AG04450 (cell line): ENCODE measurements at regions of chr16 and their contacts with region 1.

Region 1: DNA sequence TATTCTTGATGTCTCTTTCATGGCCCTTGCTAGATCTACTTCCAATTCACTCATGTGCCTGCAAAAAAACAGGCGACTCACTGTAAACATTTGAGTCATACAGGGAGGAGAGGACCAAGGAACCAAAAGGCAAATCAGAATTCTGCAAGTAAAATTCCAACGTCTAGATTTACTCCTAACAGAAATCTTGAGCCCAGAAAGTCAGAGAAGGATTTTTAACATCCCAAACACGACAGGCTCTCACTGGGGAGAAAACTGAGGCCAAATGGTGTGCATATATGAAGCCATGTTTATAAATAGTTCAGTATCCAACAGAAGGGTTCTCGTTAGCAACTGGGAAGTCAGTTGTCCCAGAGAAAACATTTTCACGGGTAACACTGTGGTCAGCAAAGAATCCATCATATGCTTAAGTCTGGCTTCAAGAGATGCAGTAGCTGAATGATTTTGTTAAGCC is 40.1 kb downstream of the LITAF start:
- DNase-seq: peak; percentile 59
- H3K4me3 ChIP-seq: no peak overlapping the region
- H3K27ac ChIP-seq: peak overlapping the region; percentile 13
- H3K27me3 ChIP-seq: no peaks in the 10 kb centered on the region
- CTCF ChIP-seq: no peak

Region 2: DNA sequence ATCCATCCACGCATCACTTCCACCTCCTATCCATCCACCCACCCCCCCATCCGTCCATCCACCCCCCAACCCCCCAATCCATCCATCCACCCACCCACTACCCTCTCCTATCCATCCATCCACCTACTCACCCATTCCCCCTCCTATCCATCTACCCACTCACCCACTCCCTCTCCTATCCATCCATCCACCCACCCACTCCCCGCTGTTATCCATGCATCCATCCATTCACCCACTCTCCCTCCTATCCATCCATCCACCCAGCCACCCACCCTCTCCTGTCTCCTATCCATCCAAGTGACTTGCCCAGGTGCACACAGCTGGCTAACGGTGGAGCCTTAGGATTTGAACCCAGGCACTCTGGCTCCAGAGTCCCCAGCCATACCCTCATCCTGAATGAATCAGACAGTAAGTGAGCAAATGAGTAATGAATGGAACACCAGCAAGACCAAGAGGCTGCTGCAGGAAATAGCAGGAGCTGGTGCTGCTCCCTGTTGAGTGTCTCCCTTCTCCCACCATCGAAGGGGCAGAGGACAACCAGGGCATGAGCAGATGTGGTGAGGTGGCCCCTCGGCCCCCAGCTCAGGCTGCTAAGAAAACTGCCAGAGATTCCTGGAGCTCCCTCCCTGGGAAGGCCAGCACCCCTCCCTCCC is 22.4 kb before region 1 on chr16:
- CTCF ChIA-PET with region 1: no interaction called
- POLR2A ChIA-PET with region 1: no interaction called
- DNase-seq: no peak
- H3K4me3 ChIP-seq: no peak overlapping the region
- H3K27ac ChIP-seq: no peak overlapping the region
- H3K27me3 ChIP-seq: peaks cover 18% of the 10 kb centered on the region
- CTCF ChIP-seq: no peak

Region 3: DNA sequence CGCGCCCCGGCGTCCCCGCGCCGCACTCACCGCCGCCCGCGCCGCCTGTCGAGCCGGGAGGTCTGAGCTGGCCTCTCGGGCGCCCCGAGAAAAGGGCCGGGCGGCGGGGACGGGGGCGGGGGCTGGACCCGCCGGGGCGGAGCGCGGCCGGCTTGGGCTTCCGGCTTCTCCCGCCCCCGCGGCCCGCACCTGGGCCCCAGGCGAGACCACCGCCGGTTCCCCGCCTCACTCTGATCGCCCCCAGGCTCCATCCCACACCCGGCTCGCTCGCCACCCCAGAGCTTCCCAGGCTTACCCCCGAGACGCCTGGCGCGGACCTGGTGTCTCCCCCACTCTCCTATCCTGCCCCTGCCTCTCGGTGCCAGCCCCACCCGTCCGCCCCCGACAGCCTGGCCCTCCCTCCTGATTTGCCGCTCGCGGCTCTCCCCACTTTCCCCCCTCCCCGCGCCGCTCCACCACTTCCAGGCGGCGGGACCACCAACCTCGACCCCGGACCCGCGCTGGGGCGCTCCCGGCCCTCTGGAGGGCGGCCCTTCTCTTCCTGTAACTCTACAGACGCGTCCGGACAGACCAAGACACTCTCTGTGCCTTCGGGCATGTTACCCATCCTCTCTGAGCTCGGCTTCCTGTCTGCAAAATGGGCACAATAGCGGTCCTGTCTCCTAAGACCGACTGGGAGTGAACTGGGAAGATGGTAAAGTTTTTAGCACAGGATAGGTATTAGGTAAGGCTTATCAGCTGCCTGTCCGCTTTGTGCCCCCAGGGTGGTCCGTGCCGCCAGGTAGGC is 40.4 kb after region 1 on chr16 and contains the start of gene LITAF:
- CTCF ChIA-PET with region 1: interaction called, 13 read pairs
- POLR2A ChIA-PET with region 1: interaction called, 3 read pairs
- DNase-seq: no peak
- H3K4me3 ChIP-seq: peak within 1 kb of the TSS; percentile 90
- H3K27ac ChIP-seq: peak within 1 kb of the TSS; percentile 57
- H3K27me3 ChIP-seq: no peaks in the 10 kb centered on the region
- CTCF ChIP-seq: no peak
- polyA plus RNA-seq, gene LITAF: 190 and 217 TPM in 2 replicates